B cell (primary cell): ENCODE measurements at regions of chr1 and their contacts with region 1.

Region 1: GRCh38 chr1:101309334-101310311 is 72.8 kb downstream of the S1PR1 start:
- DNase-seq: peak; percentile 87
- ATAC-seq: peak; percentile 75
- H3K4me3 ChIP-seq: peak overlapping the region; percentile 23 to 60 (median 43)
- H3K4me3 Mint-ChIP-seq: peak overlapping the region; percentile 86
- H3K27ac ChIP-seq: peak overlapping the region; percentile 86 to 97
- H3K27ac Mint-ChIP-seq: peak overlapping the region; percentile 91
- H3K4me1 ChIP-seq: peaks cover 58 to 67% of the 10 kb centered on the region in 2 donors
- H3K4me1 Mint-ChIP-seq: peaks cover 75% of the 10 kb centered on the region
- H3K27me3 ChIP-seq: no peaks in the 10 kb centered on the region
- H3K27me3 Mint-ChIP-seq: no peaks in the 10 kb centered on the region
- CTCF ChIP-seq: peak; percentile 78

Region 2: DNA sequence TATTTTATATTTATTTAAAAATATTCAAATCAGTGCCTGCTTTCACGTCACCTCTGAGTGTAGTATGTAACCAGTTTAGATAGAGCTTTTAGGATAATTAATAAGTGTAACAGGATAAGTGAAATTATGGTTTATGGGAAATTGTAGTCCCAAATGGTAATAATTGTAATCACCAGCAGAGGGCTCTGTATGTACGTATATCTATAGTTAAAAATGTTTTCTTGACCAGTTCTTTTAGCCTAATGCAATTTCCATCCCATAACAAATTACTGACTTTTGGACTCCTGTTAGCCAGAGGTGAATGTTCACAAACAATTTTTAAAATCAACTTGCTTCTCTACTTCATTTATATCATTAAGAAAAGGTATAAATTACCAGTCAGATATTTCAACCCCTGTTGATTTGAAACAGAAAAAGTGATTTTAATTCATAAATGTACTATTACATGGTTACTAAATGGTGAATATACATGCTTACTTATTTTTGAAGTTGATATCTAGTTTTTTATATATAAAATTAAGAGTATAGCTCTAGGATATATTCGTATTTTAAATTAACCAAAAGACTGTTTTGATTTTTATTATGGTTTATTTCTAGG is 388.4 kb before region 1 on chr1:
- CTCF ChIA-PET with region 1: interaction called, 17 read pairs
- POLR2A ChIA-PET with region 1: no interaction called
- intact Hi-C with region 1: no loop called
- DNase-seq: peak; percentile 74
- ATAC-seq: peak; percentile 47
- H3K4me3 ChIP-seq: no peak overlapping the region
- H3K4me3 Mint-ChIP-seq: no peak overlapping the region
- H3K27ac ChIP-seq: no peak overlapping the region
- H3K27ac Mint-ChIP-seq: no peak overlapping the region
- H3K4me1 ChIP-seq: peaks cover 0 to 7% of the 10 kb centered on the region in 2 donors
- H3K4me1 Mint-ChIP-seq: peaks cover 17% of the 10 kb centered on the region
- H3K27me3 ChIP-seq: no peaks in the 10 kb centered on the region
- H3K27me3 Mint-ChIP-seq: no peaks in the 10 kb centered on the region
- CTCF ChIP-seq: peak; percentile 93

Region 3: DNA sequence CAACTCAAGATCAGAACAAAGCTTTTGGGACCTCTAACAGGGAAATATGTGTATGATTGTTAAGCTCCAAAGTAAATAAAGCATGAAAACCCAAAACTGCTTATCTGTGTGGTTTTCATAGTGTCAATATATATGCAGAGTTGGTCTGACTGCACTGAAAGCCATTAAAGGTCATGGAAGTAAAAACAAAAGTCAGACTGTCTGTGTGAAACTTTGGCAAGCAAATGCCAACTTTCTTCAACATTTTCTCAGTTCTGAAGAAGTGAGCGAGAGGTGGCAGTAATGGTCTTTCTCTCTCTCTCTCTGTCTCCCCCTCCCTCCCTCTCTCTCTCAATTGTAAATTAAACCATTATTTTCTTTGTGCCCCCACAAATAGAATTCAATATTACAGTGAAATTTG is 172.9 kb before region 1 on chr1:
- CTCF ChIA-PET with region 1: interaction called, 11 read pairs
- POLR2A ChIA-PET with region 1: no interaction called
- intact Hi-C with region 1: no loop called
- DNase-seq: peak; percentile 54
- ATAC-seq: peak; percentile 70
- H3K4me3 ChIP-seq: no peak overlapping the region
- H3K4me3 Mint-ChIP-seq: peak overlapping the region; percentile 17
- H3K27ac ChIP-seq: peak overlapping the region; percentile 1 to 32
- H3K27ac Mint-ChIP-seq: peak overlapping the region; percentile 70
- H3K4me1 ChIP-seq: peaks cover 38 to 40% of the 10 kb centered on the region in 2 donors
- H3K4me1 Mint-ChIP-seq: peaks cover 49% of the 10 kb centered on the region
- H3K27me3 ChIP-seq: no peaks in the 10 kb centered on the region
- H3K27me3 Mint-ChIP-seq: no peaks in the 10 kb centered on the region
- CTCF ChIP-seq: no peak

Region 4: DNA sequence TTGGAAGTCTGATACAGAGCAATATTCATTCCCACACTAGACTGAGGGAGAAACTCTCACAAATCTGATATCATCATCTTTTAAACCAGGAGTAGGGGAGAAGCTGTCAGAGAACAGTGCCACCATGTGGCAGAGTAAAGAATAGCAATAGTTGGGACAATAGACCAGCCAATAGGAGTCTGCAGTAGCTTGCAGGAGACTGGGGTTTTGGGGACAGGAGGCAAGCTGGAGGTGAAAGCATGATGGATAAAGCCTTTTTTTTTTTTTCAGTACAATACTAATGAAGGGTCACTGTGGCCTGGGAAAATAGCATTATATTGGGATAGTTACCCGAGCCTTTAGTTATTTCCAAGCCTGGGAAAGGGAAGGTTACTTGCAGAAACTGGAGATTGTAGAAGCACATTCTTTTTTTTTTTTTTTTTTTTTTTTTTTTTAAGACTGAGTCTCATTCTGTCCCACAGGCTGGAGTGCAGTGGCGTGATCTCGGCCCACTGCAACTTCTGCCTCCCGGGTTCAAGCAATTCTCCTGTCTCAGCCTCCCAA is 47.9 kb after region 1 on chr1:
- CTCF ChIA-PET with region 1: interaction called, 144 read pairs
- POLR2A ChIA-PET with region 1: interaction called, 14 read pairs
- intact Hi-C with region 1: loop called (anchors 1 kb)
- DNase-seq: peak; percentile 88
- ATAC-seq: peak; percentile 98
- H3K4me3 ChIP-seq: no peak overlapping the region
- H3K4me3 Mint-ChIP-seq: no peak overlapping the region
- H3K27ac ChIP-seq: no peak overlapping the region
- H3K27ac Mint-ChIP-seq: no peak overlapping the region
- H3K4me1 ChIP-seq: peaks cover 4 to 7% of the 10 kb centered on the region in 2 donors
- H3K4me1 Mint-ChIP-seq: peaks cover 7% of the 10 kb centered on the region
- H3K27me3 ChIP-seq: no peaks in the 10 kb centered on the region
- H3K27me3 Mint-ChIP-seq: no peaks in the 10 kb centered on the region
- CTCF ChIP-seq: peak; percentile 91

Region 5: DNA sequence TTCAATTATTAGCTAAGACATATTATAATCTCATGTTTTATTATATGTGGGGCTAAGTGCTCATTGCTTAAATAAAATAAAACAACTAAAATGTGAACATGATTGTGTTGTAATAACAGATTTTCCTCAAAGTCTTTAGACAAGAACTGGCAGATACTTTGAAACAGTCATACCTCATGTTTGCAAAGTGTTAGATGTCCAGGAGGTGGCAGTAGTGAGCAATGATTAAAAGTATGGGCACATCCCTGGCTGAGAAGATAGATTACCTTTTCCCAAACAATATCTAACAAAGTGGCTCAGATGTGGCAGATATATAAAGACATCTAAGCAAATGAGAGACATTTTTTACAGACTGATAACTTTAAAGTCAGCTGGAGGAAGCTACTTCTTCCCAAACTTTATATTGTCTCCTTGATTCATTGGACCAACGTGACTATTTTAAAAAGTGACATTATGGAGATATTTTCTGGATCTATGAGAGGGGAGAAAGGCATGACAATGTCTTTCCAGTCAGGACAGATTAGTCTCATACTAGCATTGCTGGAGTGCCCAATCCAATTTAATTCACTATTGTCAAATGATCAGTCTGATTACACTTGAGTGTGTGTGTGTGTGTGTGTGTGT is 197.0 kb after region 1 on chr1:
- CTCF ChIA-PET with region 1: interaction called, 18 read pairs
- POLR2A ChIA-PET with region 1: no interaction called
- intact Hi-C with region 1: no loop called
- DNase-seq: peak; percentile 61
- ATAC-seq: no peak
- H3K4me3 ChIP-seq: no peak overlapping the region
- H3K4me3 Mint-ChIP-seq: no peak overlapping the region
- H3K27ac ChIP-seq: no peak overlapping the region
- H3K27ac Mint-ChIP-seq: no peak overlapping the region
- H3K4me1 ChIP-seq: no peaks in the 10 kb centered on the region
- H3K4me1 Mint-ChIP-seq: no peaks in the 10 kb centered on the region
- H3K27me3 ChIP-seq: no peaks in the 10 kb centered on the region
- H3K27me3 Mint-ChIP-seq: no peaks in the 10 kb centered on the region
- CTCF ChIP-seq: peak; percentile 89